ENCODE measurements at regions of chr15 and their contacts with region 1.

Region 1: DNA sequence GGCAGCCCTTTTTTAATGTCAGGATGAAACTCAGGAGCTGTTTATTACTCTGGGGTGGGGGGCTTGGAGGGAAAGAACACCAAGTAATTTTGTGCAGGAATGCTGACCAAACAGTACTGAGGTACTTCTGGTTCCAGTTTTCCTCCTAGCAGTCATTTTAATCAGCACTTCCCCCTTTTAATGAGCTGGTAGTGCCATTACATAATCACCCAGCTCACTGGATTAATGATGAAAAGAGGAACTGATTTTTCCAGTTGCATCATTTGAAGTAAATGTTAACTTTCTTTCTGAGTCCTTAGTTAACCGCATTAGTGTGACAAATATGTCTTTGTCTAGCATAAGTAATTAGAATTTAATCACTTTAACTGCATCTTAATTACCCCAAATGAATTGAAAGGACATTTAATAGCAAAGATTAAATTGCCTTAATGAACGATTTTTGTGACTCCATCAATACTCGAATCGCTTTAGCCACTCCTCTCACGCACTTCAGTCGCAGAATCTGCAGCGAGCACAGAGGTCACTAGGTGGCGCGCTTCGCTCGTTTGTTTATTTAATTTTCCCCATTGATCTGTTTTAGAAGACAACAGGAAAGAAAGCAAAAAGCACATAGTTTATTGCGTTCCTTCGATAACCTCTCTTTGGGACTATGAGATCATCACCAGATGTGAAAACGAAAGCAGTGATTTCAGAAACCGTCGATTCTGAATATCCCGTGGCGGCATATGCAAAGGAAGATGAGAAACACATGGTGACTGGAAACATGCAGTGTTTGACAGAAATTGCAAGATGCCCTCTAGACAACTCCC is 9.8 kb downstream of the ONECUT1 start:
- DNase-seq: peak; percentile 57
- H3K4me3 Mint-ChIP-seq: peak overlapping the region; percentile 47
- H3K27ac Mint-ChIP-seq: no peak overlapping the region
- H3K4me1 Mint-ChIP-seq: peaks cover 26% of the 10 kb centered on the region
- H3K27me3 Mint-ChIP-seq: peaks cover 72% of the 10 kb centered on the region

Region 2: DNA sequence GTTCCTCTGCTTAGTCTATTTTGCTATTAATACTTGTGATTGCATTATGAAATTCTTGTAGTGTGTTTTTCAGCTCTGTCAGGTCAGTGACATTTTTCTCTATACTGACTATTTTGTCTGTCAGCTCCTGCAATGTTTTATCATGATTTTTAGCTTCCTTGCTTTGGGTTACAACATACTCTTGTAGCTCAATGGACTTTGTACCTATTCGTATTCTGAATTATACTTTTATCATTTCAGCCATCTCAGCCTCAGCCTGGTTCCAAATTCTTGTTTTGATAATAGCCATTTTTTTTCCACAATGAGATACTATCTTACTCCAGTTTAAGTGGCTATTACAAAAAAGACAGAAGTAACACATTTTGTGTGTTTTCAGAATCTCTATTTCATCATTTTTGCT is 213.9 kb after region 1 on chr15:
- intact Hi-C with region 1: no loop called
- DNase-seq: no peak
- H3K4me3 Mint-ChIP-seq: no peak overlapping the region
- H3K27ac Mint-ChIP-seq: no peak overlapping the region
- H3K4me1 Mint-ChIP-seq: no peaks in the 10 kb centered on the region
- H3K27me3 Mint-ChIP-seq: no peaks in the 10 kb centered on the region

Region 3: DNA sequence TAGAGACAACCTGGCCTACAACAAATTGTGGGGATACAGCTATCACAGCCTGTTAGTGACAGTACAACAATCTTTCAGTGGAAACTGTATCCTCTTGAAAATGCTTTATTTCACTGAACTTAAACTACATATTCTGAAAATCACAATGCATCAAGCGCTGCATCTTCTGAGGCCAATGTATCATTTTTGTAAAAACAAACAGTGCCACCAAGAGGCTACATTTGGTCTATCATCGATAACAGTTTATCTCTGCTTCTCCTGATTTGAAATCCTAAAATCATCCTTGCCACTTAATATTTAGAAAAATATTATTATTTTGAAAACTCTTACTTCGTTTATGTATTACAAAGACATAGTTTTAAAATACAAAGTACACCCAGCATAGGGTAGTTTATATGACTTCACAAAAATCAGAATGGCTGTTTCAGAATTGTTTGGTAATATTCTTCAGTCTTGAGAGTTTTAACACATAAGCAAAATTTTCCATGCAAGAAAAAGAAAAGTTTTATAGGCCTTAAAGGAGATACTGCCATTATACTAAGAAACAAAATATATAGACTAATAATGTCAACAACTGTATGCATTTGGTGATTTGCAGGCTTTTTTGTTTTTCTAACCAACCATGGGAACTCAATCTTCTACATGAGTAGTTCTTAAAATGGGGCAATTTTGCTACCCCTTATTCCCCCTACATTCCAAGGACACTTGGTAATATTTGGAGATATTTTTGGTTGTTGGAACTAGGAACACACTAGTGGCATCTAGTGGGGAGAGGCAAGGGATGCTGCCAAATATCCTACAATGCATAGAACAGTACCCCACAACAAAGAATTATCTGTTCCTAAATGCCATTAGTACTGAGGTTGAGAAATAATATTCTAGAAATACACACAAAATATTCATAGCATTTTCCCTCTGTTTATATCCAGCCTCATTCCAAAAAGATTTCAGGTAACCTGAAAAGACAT is 936.8 kb after region 1 on chr15:
- intact Hi-C with region 1: loop called (anchors 10 kb)
- DNase-seq: no peak
- H3K4me3 Mint-ChIP-seq: no peak overlapping the region
- H3K27ac Mint-ChIP-seq: no peak overlapping the region
- H3K4me1 Mint-ChIP-seq: no peaks in the 10 kb centered on the region
- H3K27me3 Mint-ChIP-seq: no peaks in the 10 kb centered on the region